A673 (cell line): ENCODE measurements at regions of chr5 and their contacts with region 1.

Region 1: GRCh38 chr5:142655339-142656267 is 30.3 kb downstream of the FGF1 start:
- DNase-seq: peak; percentile 88
- H3K4me3 ChIP-seq: no peak overlapping the region
- H3K27ac ChIP-seq: no peak overlapping the region
- H3K4me1 ChIP-seq: peaks cover 14% of the 10 kb centered on the region
- H3K27me3 ChIP-seq: no peaks in the 10 kb centered on the region
- CTCF ChIP-seq: peak; percentile 99

Region 2: GRCh38 chr5:142263346-142263745 is 392.3 kb before region 1 on chr5:
- CTCF ChIA-PET with region 1: no interaction called
- POLR2A ChIA-PET with region 1: no interaction called
- intact Hi-C with region 1: no loop called
- DNase-seq: no peak
- H3K4me3 ChIP-seq: no peak overlapping the region
- H3K27ac ChIP-seq: no peak overlapping the region
- H3K4me1 ChIP-seq: no peaks in the 10 kb centered on the region
- H3K27me3 ChIP-seq: no peaks in the 10 kb centered on the region
- CTCF ChIP-seq: no peak

Region 3: GRCh38 chr5:142611154-142611553 is 44.4 kb before region 1 on chr5:
- CTCF ChIA-PET with region 1: interaction called, 7 read pairs
- POLR2A ChIA-PET with region 1: no interaction called
- intact Hi-C with region 1: loop called (anchors 2 kb)
- DNase-seq: peak; percentile 73
- H3K4me3 ChIP-seq: no peak overlapping the region
- H3K27ac ChIP-seq: no peak overlapping the region
- H3K4me1 ChIP-seq: peaks cover 13% of the 10 kb centered on the region
- H3K27me3 ChIP-seq: no peaks in the 10 kb centered on the region
- CTCF ChIP-seq: peak; percentile 82

Region 4: GRCh38 chr5:142644640-142645361 is 10.8 kb before region 1 on chr5:
- CTCF ChIA-PET with region 1: interaction called, 21 read pairs
- POLR2A ChIA-PET with region 1: no interaction called
- intact Hi-C with region 1: no loop called
- DNase-seq: peak; percentile 94
- H3K4me3 ChIP-seq: peak overlapping the region; percentile 2
- H3K27ac ChIP-seq: no peak overlapping the region
- H3K4me1 ChIP-seq: peaks cover 36% of the 10 kb centered on the region
- H3K27me3 ChIP-seq: no peaks in the 10 kb centered on the region
- CTCF ChIP-seq: no peak

Region 5: DNA sequence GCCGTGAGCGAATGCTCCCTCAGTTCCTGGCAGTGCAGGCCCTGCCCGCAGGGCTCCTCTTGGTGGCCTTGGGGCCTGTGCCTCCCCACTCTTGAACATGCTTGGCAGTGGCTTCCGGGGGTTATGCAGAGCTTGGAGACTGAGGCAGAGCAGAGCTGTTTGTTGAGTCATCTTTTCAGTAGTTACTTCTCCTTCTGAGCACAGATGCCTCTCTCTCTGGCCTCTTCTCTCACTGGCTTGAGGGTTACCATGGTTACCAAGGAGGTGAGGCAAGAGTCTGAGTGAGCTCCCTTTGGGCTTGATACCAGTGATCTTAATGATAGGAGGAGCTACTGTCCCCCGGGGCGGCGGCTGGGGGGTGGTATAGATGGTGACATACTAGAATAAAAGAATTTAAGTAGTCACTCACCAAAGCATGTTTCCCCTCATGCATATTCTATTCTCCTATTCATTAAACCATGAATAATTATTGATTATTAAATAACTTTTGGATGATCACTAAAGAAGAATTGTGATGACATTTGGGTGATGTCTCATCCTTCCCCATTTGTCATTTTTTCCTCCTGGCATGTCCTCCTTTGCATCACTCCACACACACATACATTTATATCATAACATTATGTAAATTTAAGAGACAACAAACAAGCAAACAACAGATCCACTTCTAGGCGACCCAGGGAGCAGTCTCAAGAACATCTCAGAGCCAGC is 225.6 kb after region 1 on chr5:
- CTCF ChIA-PET with region 1: interaction called, 3 read pairs
- POLR2A ChIA-PET with region 1: no interaction called
- intact Hi-C with region 1: loop called (anchors 2 kb)
- DNase-seq: peak; percentile 62
- H3K4me3 ChIP-seq: no peak overlapping the region
- H3K27ac ChIP-seq: no peak overlapping the region
- H3K4me1 ChIP-seq: peaks cover 29% of the 10 kb centered on the region
- H3K27me3 ChIP-seq: no peaks in the 10 kb centered on the region
- CTCF ChIP-seq: no peak

Region 6: DNA sequence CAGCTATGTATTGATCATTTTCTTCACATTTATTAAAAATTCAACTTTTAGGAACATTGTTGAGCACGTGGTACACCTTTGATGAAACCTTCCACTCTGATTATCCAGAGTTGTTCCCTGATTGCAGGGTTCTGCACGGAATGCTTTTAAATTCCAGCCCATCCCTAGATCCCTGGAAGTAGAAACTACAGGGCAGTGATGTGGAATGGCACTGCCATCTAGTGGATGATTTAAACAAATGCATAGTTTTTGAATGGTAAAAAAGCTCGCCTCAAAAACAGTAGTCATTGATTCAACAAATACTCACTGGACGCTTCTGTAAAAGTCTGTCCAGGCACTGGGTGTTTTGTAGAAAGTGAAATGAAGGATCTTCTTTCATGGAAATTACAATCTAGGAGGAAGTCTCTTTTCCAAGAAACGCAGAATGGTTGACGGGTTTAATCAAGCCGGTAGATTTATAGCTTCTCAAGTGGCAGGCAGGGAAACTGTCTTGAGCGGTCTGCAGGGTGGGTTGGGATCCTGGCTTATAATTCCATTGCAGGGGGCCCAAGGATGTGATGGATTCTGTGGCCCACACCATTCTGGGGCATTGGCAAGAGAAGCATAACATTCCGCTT is 233.0 kb after region 1 on chr5:
- CTCF ChIA-PET with region 1: interaction called, 14 read pairs
- POLR2A ChIA-PET with region 1: no interaction called
- intact Hi-C with region 1: no loop called
- DNase-seq: peak; percentile 68
- H3K4me3 ChIP-seq: no peak overlapping the region
- H3K27ac ChIP-seq: no peak overlapping the region
- H3K4me1 ChIP-seq: peaks cover 3% of the 10 kb centered on the region
- H3K27me3 ChIP-seq: no peaks in the 10 kb centered on the region
- CTCF ChIP-seq: peak; percentile 78

Region 7: DNA sequence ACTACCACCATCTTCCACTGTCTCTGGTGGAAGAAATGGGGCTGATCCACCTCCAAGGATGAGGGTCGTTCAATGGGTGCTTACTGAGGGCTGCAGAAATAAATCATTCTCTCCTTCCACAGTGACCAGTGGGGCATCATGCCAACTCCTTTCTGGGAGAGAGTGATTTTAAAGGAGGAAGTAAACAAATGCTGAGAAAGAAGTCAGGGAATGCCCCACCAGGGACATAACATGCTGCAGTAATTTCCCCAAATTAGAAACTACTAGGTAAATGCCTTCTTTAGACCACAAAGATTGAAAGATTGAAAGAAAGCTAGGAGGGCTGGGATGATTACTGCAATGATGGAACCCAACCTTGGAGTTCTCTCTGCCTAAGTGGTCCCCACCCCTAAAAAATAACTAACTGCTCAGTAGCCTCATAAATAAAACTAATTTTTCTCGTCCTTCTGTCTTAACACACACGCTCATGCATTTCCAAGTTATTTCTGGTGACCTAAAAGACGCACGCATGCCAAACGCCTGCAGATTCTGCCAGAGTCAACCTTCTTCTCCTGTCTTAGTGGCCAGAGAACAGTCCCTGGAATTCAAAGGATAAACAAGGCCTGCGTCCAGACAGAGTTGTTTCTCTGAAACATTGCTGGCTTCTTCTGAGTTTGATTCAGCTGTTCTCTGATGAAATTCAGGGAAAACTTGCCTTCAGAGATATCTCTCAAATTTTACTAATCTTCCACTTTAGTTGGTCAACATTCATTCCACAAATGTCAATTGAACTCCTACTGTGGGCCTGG is 497.9 kb after region 1 on chr5:
- CTCF ChIA-PET with region 1: no interaction called
- POLR2A ChIA-PET with region 1: no interaction called
- intact Hi-C with region 1: no loop called
- DNase-seq: no peak
- H3K4me3 ChIP-seq: no peak overlapping the region
- H3K27ac ChIP-seq: no peak overlapping the region
- H3K4me1 ChIP-seq: no peaks in the 10 kb centered on the region
- H3K27me3 ChIP-seq: no peaks in the 10 kb centered on the region
- CTCF ChIP-seq: no peak